Activated CD8-positive, alpha-beta T cell treated with anti-CD3 and anti-CD28 coated beads for 36 hours (primary cell): ENCODE measurements at regions of chr1 and their contacts with region 1.

Region 1: DNA sequence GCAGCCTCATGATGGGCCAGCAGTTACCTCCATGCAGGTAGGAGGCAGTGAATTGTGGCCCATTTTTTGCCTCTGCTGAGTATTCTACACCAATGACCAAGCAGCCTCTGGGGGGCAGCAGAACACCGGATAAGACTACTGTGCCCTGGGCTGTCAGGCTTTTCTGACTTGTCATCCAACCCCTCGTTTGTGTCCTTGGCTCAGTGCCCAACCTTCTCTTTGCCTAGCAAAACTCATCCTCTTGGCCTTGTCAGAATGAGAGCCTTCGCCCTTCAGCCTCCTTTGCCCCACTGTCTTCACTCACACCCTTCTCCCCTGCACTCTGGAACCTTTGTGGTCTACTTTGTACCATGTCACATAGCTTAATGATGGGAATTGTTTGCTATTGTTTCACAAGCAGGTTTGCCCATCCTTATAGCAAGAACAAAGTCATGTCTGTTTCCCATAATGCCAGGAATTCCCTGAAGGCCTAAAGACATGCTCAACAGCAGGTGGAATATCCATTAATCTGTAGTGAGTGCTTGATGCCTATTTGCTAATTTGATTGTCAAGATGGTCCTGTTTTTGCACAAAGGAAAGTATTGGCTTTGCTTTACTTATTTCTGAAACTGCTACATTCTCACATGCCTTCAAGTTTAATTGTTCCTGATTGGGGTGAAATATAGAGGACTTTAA is 255.9 kb downstream of the HHAT start:
- DNase-seq: peak; percentile 91
- ATAC-seq: peak; percentile 88
- H3K4me3 Mint-ChIP-seq: no peak overlapping the region
- H3K27ac Mint-ChIP-seq: no peak overlapping the region
- H3K4me1 Mint-ChIP-seq: peaks cover 11% of the 10 kb centered on the region
- H3K27me3 Mint-ChIP-seq: no peaks in the 10 kb centered on the region
- CTCF ChIP-seq: peak; percentile 67

Region 2: GRCh38 chr1:210754878-210755665 is 170.5 kb after region 1 on chr1:
- CTCF ChIA-PET with region 1: no interaction called
- POLR2A ChIA-PET with region 1: no interaction called
- intact Hi-C with region 1: no loop called
- DNase-seq: no peak
- ATAC-seq: no peak
- H3K4me3 Mint-ChIP-seq: no peak overlapping the region
- H3K27ac Mint-ChIP-seq: no peak overlapping the region
- H3K4me1 Mint-ChIP-seq: no peaks in the 10 kb centered on the region
- H3K27me3 Mint-ChIP-seq: peaks cover 3% of the 10 kb centered on the region
- CTCF ChIP-seq: no peak

Region 3: DNA sequence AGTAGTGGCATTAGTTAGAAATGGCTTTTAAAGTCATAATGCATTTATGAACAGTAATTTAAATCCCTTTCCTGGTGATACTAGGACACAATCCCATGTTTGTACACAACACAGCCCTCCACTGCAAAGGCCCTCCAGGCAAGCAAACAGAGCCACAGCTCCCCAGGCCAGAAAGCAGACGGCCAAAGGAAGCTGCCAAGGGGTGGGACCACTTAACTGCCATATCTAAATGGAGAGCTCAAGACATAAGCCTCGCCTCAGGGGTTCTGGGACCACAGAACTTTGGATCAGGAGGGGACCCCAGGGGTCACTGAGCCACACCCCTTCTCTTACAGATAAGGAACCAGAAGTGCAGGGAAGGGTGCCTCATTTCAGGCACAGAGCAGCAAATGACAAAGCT is 359.7 kb after region 1 on chr1:
- CTCF ChIA-PET with region 1: no interaction called
- POLR2A ChIA-PET with region 1: no interaction called
- intact Hi-C with region 1: loop called (anchors 10 kb)
- DNase-seq: no peak
- ATAC-seq: no peak
- H3K4me3 Mint-ChIP-seq: no peak overlapping the region
- H3K27ac Mint-ChIP-seq: no peak overlapping the region
- H3K4me1 Mint-ChIP-seq: peaks cover 2% of the 10 kb centered on the region
- H3K27me3 Mint-ChIP-seq: no peaks in the 10 kb centered on the region
- CTCF ChIP-seq: no peak